ENCODE measurements at regions of chr1 and their contacts with region 1.

Region 1: GRCh38 chr1:43015015-43015668 is 56.5 kb upstream of the SLC2A1 start:
- DNase-seq: no peak
- ATAC-seq: no peak
- H3K4me3 ChIP-seq: no peak overlapping the region
- H3K27ac ChIP-seq: no peak overlapping the region
- H3K4me1 ChIP-seq: no peaks in the 10 kb centered on the region
- H3K27me3 ChIP-seq: peaks cover 32% of the 10 kb centered on the region
- CTCF ChIP-seq: no peak
- POLR2A ChIP-seq: no peak
- RAD21 ChIP-seq: no peak

Region 2: GRCh38 chr1:42979896-42980800 is 35.0 kb before region 1 on chr1:
- CTCF ChIA-PET with region 1: no interaction called
- POLR2A ChIA-PET with region 1: interaction called, 3 read pairs
- dilution Hi-C with region 1: no loop called
- in situ Hi-C with region 1: no loop called
- intact Hi-C with region 1: loop called (anchors 5 kb)
- DNase-seq: no peak
- ATAC-seq: no peak
- H3K4me3 ChIP-seq: no peak overlapping the region
- H3K27ac ChIP-seq: no peak overlapping the region
- H3K4me1 ChIP-seq: peaks cover 13% of the 10 kb centered on the region
- H3K27me3 ChIP-seq: no peaks in the 10 kb centered on the region
- CTCF ChIP-seq: no peak
- POLR2A ChIP-seq: no peak
- RAD21 ChIP-seq: no peak

Region 3: DNA sequence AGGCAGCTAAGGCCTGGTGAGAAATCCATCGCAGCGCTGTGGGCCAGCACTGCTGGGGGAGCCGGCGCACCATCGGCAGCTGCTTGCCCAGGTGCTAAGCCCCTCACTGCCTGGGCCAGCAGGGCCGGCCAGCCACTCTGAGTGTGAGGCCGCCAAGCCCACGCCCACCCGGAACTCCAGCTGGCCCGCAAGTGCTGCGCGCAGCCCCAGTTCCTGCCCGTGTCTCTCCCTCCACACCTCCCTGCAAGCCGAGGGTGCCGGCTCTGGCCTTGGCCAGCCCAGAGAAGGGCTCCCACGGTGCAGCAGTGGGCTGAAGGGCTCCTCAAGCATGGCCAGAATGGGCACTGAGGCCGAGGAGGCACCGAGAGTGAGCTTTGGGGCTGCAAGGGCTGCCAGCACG is 92.5 kb after region 1 on chr1:
- CTCF ChIA-PET with region 1: no interaction called
- POLR2A ChIA-PET with region 1: no interaction called
- dilution Hi-C with region 1: no loop called
- in situ Hi-C with region 1: no loop called
- intact Hi-C with region 1: no loop called
- DNase-seq: no peak
- ATAC-seq: no peak
- H3K4me3 ChIP-seq: no peak overlapping the region
- H3K27ac ChIP-seq: no peak overlapping the region
- H3K4me1 ChIP-seq: no peaks in the 10 kb centered on the region
- H3K27me3 ChIP-seq: no peaks in the 10 kb centered on the region
- CTCF ChIP-seq: no peak
- POLR2A ChIP-seq: no peak
- RAD21 ChIP-seq: no peak